ENCODE measurements at regions of chr17 and their contacts with region 1.

Region 1: DNA sequence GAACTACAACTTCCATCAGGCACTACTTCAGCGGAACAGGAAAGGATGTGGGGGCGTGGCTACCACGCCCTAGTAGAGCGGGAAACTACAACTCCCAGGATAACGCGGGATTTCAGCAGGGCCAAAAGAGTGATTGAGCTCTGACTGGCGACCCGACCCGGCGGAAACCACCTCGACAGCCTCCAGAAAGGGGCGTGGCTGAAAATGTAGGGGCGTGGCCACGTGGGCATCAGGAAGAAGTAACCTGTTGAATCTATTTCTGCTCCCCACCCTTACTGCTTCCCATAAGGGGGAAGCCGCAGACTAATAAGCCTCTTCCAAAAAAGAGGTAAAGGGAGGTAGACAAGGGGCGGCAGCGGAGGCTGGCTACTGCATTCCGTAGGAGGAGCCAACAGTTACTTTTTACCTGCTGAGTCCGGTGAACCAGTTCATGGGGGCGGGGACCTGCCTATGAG is at the start of gene TMEM102:
- DNase-seq: peak; percentile 99
- ATAC-seq: peak; percentile 87
- H3K4me3 ChIP-seq: peak within 1 kb of the TSS; percentile 77 to 93 (median 79)
- H3K4me3 Mint-ChIP-seq: peak within 1 kb of the TSS; percentile 96
- H3K27ac ChIP-seq: peak within 1 kb of the TSS; percentile 80 to 82
- H3K27ac Mint-ChIP-seq: peak within 1 kb of the TSS; percentile 94
- H3K4me1 ChIP-seq: peaks cover 41 to 45% of the 10 kb centered on the region in 2 donors
- H3K4me1 Mint-ChIP-seq: peaks cover 43% of the 10 kb centered on the region
- H3K27me3 ChIP-seq: peaks cover 0 to 24% (median 17%) of the 10 kb centered on the region in 4 experiments
- H3K27me3 Mint-ChIP-seq: peaks cover 17% of the 10 kb centered on the region
- CTCF ChIP-seq: no peak
- total RNA-seq, gene TMEM102: 17.7 and 19.1 TPM in 2 replicates

Region 2: DNA sequence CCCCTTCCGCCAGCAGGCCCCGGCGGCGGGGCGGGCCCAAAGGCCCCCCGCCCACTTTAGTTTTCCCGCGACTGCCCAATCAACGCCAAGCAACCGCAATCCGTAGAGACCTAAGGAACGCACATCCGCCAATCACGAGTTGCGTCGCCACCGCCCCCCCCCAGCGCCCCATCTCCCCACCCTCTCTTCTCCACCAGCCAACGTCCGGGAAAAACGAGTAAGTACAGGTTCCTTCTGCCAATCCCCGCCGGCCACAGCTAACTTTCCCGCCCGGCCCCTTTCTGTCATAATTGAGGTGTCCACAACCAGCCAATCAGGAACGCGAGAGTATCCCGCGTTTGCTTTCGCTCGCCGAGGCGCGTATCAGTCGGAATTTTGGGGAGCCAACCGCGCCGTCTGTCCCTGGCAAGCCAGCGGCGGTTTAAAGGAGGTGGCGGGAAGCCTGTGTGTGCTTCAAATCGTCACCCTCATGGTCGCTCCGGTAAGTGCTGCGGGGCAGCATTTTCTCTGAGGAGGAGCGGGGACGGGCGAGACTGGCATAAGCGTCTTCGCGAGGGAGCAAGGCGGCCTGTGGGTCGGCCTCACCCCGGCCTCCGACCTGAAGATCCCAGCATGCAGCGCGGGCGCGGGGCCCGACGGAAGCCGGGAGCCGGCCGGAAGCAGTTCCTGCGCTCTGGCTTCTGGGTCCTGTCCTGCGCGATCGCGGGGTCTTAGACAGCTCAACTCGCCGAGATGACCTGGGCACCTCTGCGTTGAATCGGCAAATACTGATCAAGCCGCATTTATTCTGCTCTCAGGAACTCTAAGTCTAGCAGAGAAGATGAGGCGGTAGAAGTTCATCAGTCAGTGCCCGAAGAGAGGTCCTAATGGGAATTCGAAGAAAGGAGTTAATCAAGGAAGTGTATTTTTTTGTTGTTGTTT is 1948.8 kb before region 1 on chr17 and contains the start of gene MIS12:
- CTCF ChIA-PET with region 1: no interaction called
- POLR2A ChIA-PET with region 1: no interaction called
- intact Hi-C with region 1: loop called (anchors 5 kb)
- DNase-seq: peak; percentile 98
- ATAC-seq: peak; percentile 90
- H3K4me3 ChIP-seq: peak within 1 kb of the TSS; percentile 90 to 99 (median 92)
- H3K4me3 Mint-ChIP-seq: peak within 1 kb of the TSS; percentile 94
- H3K27ac ChIP-seq: peak within 1 kb of the TSS; percentile 99 to 100
- H3K27ac Mint-ChIP-seq: peak within 1 kb of the TSS; percentile 97
- H3K4me1 ChIP-seq: peaks cover 17 to 26% of the 10 kb centered on the region in 2 donors
- H3K4me1 Mint-ChIP-seq: peaks cover 42% of the 10 kb centered on the region
- H3K27me3 ChIP-seq: no peaks in the 10 kb centered on the region
- H3K27me3 Mint-ChIP-seq: no peaks in the 10 kb centered on the region
- CTCF ChIP-seq: no peak
- total RNA-seq, gene MIS12: 33.2 and 41.1 TPM in 2 replicates

Region 3: GRCh38 chr17:7167832-7168231 is 267.4 kb before region 1 on chr17:
- CTCF ChIA-PET with region 1: no interaction called
- POLR2A ChIA-PET with region 1: no interaction called
- intact Hi-C with region 1: no loop called
- DNase-seq: no peak
- ATAC-seq: no peak
- H3K4me3 ChIP-seq: no peak overlapping the region
- H3K4me3 Mint-ChIP-seq: no peak overlapping the region
- H3K27ac ChIP-seq: no peak overlapping the region
- H3K27ac Mint-ChIP-seq: no peak overlapping the region
- H3K4me1 ChIP-seq: no peaks in the 10 kb centered on the region
- H3K4me1 Mint-ChIP-seq: no peaks in the 10 kb centered on the region
- H3K27me3 ChIP-seq: peaks cover 0 to 5% (median 0%) of the 10 kb centered on the region in 4 experiments
- H3K27me3 Mint-ChIP-seq: peaks cover 16% of the 10 kb centered on the region
- CTCF ChIP-seq: no peak

Region 4: DNA sequence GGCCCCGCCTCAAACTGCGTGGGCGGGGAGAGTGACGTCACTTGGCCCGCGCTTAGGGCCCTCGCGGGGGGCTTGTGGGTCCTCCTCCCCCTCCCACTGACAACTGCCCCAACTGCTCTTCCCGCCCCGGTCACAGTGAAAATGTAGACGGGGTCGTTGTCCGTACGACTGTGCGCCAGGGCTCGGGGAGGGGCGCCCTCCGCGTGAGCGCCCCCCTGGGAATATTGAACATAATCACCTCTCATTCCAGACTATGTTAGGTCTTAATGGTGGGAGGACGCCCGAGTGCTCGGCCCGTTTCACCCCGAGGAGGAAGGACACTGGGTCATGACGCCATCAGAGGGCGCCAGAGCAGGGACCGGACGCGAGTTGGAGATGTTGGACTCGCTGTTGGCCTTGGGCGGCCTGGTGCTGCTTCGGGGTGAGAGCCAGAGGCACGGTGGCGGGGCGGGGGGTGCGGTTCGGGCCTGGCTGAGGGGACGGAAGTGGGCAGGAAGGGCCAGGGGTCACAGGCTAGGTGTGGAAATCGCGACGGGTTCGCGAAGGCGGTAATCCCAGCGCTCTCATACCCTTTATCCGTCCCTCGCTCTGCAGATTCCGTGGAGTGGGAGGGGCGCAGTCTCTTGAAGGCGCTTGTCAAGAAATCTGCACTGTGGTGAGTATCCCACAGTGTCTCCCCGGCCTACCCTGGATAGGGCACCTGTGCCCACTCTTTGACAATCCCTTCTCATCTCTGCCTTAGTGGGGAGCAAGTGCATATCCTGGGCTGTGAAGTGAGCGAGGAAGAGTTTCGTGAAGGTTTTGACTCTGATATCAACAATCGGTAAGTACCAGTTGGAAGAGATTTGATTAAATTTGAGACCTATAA is 182.8 kb before region 1 on chr17 and contains the start of gene ELP5:
- CTCF ChIA-PET with region 1: no interaction called
- POLR2A ChIA-PET with region 1: no interaction called
- intact Hi-C with region 1: loop called (anchors 1 kb)
- DNase-seq: peak; percentile 100
- ATAC-seq: peak; percentile 64
- H3K4me3 ChIP-seq: peak within 1 kb of the TSS; percentile 69 to 90 (median 78)
- H3K4me3 Mint-ChIP-seq: peak within 1 kb of the TSS; percentile 98
- H3K27ac ChIP-seq: peak within 1 kb of the TSS; percentile 98 to 100
- H3K27ac Mint-ChIP-seq: peak within 1 kb of the TSS; percentile 100
- H3K4me1 ChIP-seq: peaks cover 30 to 33% of the 10 kb centered on the region in 2 donors
- H3K4me1 Mint-ChIP-seq: peaks cover 44% of the 10 kb centered on the region
- H3K27me3 ChIP-seq: no peaks in the 10 kb centered on the region
- H3K27me3 Mint-ChIP-seq: no peaks in the 10 kb centered on the region
- CTCF ChIP-seq: no peak
- total RNA-seq, gene ELP5: 42.2 and 48.0 TPM in 2 replicates

Region 5: DNA sequence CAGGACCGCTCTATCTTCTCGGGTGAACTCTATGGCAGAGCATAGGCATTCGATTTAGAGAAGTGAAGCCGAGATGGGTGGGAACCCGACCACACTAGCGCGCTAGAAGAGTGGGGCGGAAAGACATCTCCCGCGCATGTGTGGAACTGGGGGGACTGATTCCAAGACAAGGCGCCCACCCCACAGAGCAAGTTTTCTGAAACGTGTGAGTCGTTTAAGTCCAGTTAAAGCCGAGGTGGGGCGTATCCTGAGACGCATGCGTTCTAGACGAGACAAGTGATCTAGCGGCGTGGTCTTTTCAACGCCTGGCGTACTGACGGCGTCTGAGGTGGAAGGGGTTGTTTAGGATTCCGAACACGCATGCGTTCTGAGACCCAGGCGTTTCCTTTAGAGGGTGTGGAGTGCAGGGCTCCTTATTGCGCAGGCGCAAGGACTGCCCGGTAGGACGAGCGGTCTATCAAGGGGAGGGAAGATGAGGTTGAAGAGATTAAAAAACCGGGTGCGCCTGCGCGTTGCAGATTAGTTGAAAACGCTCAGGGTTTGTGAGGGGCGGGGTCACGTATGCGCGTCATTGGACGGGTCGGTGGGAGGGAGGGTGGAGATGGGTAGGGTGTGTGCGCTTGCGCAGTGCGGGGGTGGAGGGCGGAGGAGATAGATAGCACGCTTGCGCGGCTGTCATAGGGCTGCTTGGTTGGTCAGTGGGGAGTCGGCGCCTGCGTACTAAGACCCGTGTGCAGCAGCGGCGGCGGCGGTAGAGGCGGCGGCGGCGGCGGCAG is 128.1 kb before region 1 on chr17 and contains the start of gene EIF5A:
- CTCF ChIA-PET with region 1: no interaction called
- POLR2A ChIA-PET with region 1: no interaction called
- intact Hi-C with region 1: no loop called
- DNase-seq: peak; percentile 100
- ATAC-seq: peak; percentile 70
- H3K4me3 ChIP-seq: peak within 1 kb of the TSS; percentile 81 to 96 (median 94)
- H3K4me3 Mint-ChIP-seq: peak within 1 kb of the TSS; percentile 95
- H3K27ac ChIP-seq: peak within 1 kb of the TSS; percentile 98 to 99
- H3K27ac Mint-ChIP-seq: peak within 1 kb of the TSS; percentile 99
- H3K4me1 ChIP-seq: peaks cover 17 to 40% of the 10 kb centered on the region in 2 donors
- H3K4me1 Mint-ChIP-seq: peaks cover 39% of the 10 kb centered on the region
- H3K27me3 ChIP-seq: no peaks in the 10 kb centered on the region
- H3K27me3 Mint-ChIP-seq: no peaks in the 10 kb centered on the region
- CTCF ChIP-seq: no peak
- total RNA-seq, gene EIF5A: 233 and 236 TPM in 2 replicates

Region 6: GRCh38 chr17:7403977-7404736 is 31.1 kb before region 1 on chr17 and contains the start of gene TMEM256:
- CTCF ChIA-PET with region 1: interaction called, 6 read pairs
- POLR2A ChIA-PET with region 1: interaction called, 17 read pairs
- intact Hi-C with region 1: loop called (anchors 1 kb)
- DNase-seq: peak; percentile 98
- ATAC-seq: peak; percentile 87
- H3K4me3 ChIP-seq: peak within 1 kb of the TSS; percentile 57 to 95 (median 82)
- H3K4me3 Mint-ChIP-seq: peak within 1 kb of the TSS; percentile 98
- H3K27ac ChIP-seq: peak within 1 kb of the TSS; percentile 45 to 59
- H3K27ac Mint-ChIP-seq: peak within 1 kb of the TSS; percentile 94
- H3K4me1 ChIP-seq: peaks cover 17 to 20% of the 10 kb centered on the region in 2 donors
- H3K4me1 Mint-ChIP-seq: peaks cover 22% of the 10 kb centered on the region
- H3K27me3 ChIP-seq: peaks cover 0 to 27% (median 4%) of the 10 kb centered on the region in 4 experiments
- H3K27me3 Mint-ChIP-seq: peaks cover 17% of the 10 kb centered on the region
- CTCF ChIP-seq: no peak
- total RNA-seq, gene TMEM256: 64.5 and 67.8 TPM in 2 replicates

Region 7: DNA sequence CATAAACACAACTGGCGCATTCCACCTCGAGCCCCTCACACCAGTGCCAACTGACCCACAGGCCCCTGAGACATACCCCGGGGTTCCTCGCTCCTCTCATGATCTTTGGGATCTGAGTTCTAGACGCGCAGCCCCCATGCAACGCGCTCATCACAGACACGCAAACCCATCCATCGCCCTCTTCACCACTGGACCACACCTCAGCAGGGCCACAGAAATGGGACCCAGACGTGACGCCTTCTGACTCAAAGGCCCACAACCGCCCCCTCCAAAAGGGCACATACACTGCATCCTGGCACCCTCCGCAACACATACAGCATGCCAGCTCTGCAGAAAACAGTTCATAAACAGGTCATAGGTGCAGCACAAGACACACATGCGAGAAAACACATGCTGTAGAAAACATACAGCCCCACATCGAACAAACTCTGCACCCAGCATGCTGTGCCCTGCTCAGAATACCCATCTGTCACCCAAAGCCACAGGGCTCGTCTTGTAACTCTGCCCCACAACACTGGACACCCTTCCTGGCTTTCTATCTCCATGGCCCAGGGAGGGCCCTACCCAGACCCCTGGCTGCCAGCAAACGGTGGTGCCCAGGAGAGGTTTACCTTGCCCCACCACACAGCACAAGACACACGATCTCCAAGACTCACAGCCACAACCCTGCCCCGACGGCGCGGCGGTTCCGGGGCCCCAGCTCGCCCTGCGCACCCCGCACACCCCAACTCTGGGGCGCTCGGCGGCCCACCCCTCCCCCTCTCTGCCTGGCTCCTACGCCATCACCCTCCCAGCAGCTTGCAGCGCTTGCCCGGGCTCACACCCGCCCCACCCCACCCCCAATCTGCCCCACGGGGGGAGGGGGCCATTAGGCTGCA is 43.3 kb after region 1 on chr17:
- CTCF ChIA-PET with region 1: interaction called, 17 read pairs
- POLR2A ChIA-PET with region 1: interaction called, 27 read pairs
- intact Hi-C with region 1: no loop called
- DNase-seq: peak; percentile 79
- ATAC-seq: peak; percentile 11
- H3K4me3 ChIP-seq: peak overlapping the region; percentile 52 to 88 (median 79)
- H3K4me3 Mint-ChIP-seq: peak overlapping the region; percentile 96
- H3K27ac ChIP-seq: peak overlapping the region; percentile 75 to 95
- H3K27ac Mint-ChIP-seq: peak overlapping the region; percentile 93
- H3K4me1 ChIP-seq: peaks cover 31 to 53% of the 10 kb centered on the region in 2 donors
- H3K4me1 Mint-ChIP-seq: peaks cover 66% of the 10 kb centered on the region
- H3K27me3 ChIP-seq: no peaks in the 10 kb centered on the region
- H3K27me3 Mint-ChIP-seq: no peaks in the 10 kb centered on the region
- CTCF ChIP-seq: no peak

Region 8: GRCh38 chr17:7561028-7561575 is 125.9 kb after region 1 on chr17:
- CTCF ChIA-PET with region 1: interaction called, 35 read pairs
- POLR2A ChIA-PET with region 1: interaction called, 4 read pairs
- intact Hi-C with region 1: loop called (anchors 1 kb)
- DNase-seq: peak; percentile 89
- ATAC-seq: peak; percentile 64
- H3K4me3 ChIP-seq: peak overlapping the region; percentile 53 to 95 (median 81)
- H3K4me3 Mint-ChIP-seq: peak overlapping the region; percentile 97
- H3K27ac ChIP-seq: peak overlapping the region; percentile 97
- H3K27ac Mint-ChIP-seq: peak overlapping the region; percentile 98
- H3K4me1 ChIP-seq: peaks cover 41 to 61% of the 10 kb centered on the region in 2 donors
- H3K4me1 Mint-ChIP-seq: peaks cover 53% of the 10 kb centered on the region
- H3K27me3 ChIP-seq: no peaks in the 10 kb centered on the region
- H3K27me3 Mint-ChIP-seq: no peaks in the 10 kb centered on the region
- CTCF ChIP-seq: peak; percentile 80

Measured in B cell (primary cell).